Activated B cell treated with CpG ODN at 0.5 μM for 24 hours (primary cell): ENCODE measurements at regions of chr12 and their contacts with region 1.

Region 1: GRCh38 chr12:108664338-108665258 is 30.9 kb upstream of the SELPLG start:
- DNase-seq: peak; percentile 33
- ATAC-seq: peak; percentile 97
- H3K4me3 Mint-ChIP-seq: peak overlapping the region; percentile 36
- H3K27ac Mint-ChIP-seq: peak overlapping the region; percentile 85
- H3K4me1 Mint-ChIP-seq: peaks cover 57% of the 10 kb centered on the region
- H3K27me3 Mint-ChIP-seq: no peaks in the 10 kb centered on the region
- CTCF ChIP-seq: peak; percentile 61

Region 2: DNA sequence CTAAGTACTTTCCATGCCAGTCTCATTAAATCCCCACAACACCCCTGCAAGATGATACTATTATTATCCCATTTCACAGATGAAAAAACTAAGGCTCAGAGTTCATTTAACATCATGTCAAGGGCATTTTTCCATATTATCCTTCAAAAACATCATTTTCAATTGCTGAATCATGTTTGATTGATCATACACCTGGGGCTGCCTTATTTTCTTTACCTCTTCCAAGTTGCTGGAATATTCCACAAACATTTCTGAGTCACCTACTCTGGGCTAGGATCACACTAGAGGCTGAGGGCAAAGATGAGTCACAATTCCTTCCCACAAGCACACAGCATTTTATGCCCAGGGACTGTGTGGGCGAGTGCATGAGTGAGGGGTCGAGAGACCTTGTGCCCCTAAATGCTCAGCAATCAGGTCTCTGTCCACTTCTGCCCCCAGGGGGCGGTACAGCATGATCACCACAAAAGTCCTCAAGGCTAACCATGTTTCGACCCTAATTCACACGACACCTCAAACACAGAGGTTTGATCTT is 52.6 kb before region 1 on chr12:
- CTCF ChIA-PET with region 1: interaction called, 38 read pairs
- POLR2A ChIA-PET with region 1: interaction called, 17 read pairs
- intact Hi-C with region 1: no loop called
- DNase-seq: no peak
- ATAC-seq: peak; percentile 21
- H3K4me3 Mint-ChIP-seq: no peak overlapping the region
- H3K27ac Mint-ChIP-seq: peak overlapping the region; percentile 24
- H3K4me1 Mint-ChIP-seq: peaks cover 52% of the 10 kb centered on the region
- H3K27me3 Mint-ChIP-seq: peaks cover 8% of the 10 kb centered on the region
- CTCF ChIP-seq: no peak

Region 3: DNA sequence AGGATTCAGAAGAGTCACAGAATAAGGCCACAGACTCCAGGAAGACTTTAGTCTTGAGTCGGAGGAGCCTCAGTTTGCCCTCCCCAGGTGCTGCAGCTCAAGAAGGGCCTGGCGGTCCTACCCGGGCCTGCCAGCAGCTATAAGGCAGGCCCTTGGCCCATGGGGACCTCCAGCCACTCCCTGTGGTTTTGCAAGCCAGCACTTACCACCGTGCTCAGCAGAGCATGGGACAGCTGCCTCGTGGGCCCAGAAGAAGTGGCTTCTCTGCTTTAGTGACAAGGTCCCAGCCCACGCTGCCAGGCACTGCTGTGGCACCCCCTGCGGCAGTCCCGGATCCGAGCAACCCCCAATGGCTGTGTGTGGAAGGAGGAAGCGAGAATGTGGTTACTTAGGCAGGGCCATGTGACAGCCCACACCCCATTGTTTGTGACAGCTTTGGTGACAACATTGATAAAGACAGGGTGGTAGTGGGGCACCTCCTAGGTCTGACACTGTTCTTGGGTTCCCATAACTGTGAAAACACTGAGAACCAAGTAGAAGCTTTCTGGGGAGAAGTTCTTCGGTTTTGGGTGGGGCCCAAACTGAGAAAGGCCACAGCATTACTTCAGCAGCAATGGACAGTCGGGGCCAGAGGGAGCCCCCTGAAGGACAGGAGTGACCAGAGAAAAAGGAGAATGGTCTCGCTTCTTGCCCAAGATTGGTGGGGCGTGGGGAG is 30.9 kb before region 1 on chr12 and contains the start of gene SELPLG:
- CTCF ChIA-PET with region 1: interaction called, 43 read pairs
- POLR2A ChIA-PET with region 1: interaction called, 74 read pairs
- intact Hi-C with region 1: loop called (anchors 1 kb)
- DNase-seq: peak; percentile 79
- ATAC-seq: peak; percentile 76
- H3K4me3 Mint-ChIP-seq: peak within 1 kb of the TSS; percentile 85
- H3K27ac Mint-ChIP-seq: peak within 1 kb of the TSS; percentile 98
- H3K4me1 Mint-ChIP-seq: peaks cover 95% of the 10 kb centered on the region
- H3K27me3 Mint-ChIP-seq: no peaks in the 10 kb centered on the region
- CTCF ChIP-seq: no peak
- total RNA-seq, gene SELPLG: 1.8 and 2.0 TPM in 2 replicates

Region 4: GRCh38 chr12:108653082-108653516 is 11.5 kb before region 1 on chr12:
- CTCF ChIA-PET with region 1: interaction called, 13 read pairs
- POLR2A ChIA-PET with region 1: interaction called, 5 read pairs
- intact Hi-C with region 1: no loop called
- DNase-seq: no peak
- ATAC-seq: no peak
- H3K4me3 Mint-ChIP-seq: no peak overlapping the region
- H3K27ac Mint-ChIP-seq: peak overlapping the region; percentile 66
- H3K4me1 Mint-ChIP-seq: peaks cover 26% of the 10 kb centered on the region
- H3K27me3 Mint-ChIP-seq: no peaks in the 10 kb centered on the region
- CTCF ChIP-seq: no peak

Region 5: GRCh38 chr12:108712165-108712924 is 47.7 kb after region 1 on chr12:
- CTCF ChIA-PET with region 1: interaction called, 3 read pairs
- POLR2A ChIA-PET with region 1: interaction called, 4 read pairs
- intact Hi-C with region 1: loop called (anchors 5 kb)
- DNase-seq: no peak
- ATAC-seq: peak; percentile 73
- H3K4me3 Mint-ChIP-seq: peak overlapping the region; percentile 64
- H3K27ac Mint-ChIP-seq: peak overlapping the region; percentile 56
- H3K4me1 Mint-ChIP-seq: peaks cover 60% of the 10 kb centered on the region
- H3K27me3 Mint-ChIP-seq: no peaks in the 10 kb centered on the region
- CTCF ChIP-seq: no peak

Region 6: GRCh38 chr12:108950991-108951739 is 286.6 kb after region 1 on chr12:
- CTCF ChIA-PET with region 1: interaction called, 16 read pairs
- POLR2A ChIA-PET with region 1: no interaction called
- intact Hi-C with region 1: loop called (anchors 1 kb)
- DNase-seq: peak; percentile 46
- ATAC-seq: peak; percentile 82
- H3K4me3 Mint-ChIP-seq: no peak overlapping the region
- H3K27ac Mint-ChIP-seq: no peak overlapping the region
- H3K4me1 Mint-ChIP-seq: peaks cover 7% of the 10 kb centered on the region
- H3K27me3 Mint-ChIP-seq: peaks cover 8% of the 10 kb centered on the region
- CTCF ChIP-seq: peak; percentile 97